Activated CD8-positive, alpha-beta T cell treated with anti-CD3 and anti-CD28 coated beads for 36 hours (primary cell): ENCODE measurements at regions of chr11 and their contacts with region 1.

Region 1: DNA sequence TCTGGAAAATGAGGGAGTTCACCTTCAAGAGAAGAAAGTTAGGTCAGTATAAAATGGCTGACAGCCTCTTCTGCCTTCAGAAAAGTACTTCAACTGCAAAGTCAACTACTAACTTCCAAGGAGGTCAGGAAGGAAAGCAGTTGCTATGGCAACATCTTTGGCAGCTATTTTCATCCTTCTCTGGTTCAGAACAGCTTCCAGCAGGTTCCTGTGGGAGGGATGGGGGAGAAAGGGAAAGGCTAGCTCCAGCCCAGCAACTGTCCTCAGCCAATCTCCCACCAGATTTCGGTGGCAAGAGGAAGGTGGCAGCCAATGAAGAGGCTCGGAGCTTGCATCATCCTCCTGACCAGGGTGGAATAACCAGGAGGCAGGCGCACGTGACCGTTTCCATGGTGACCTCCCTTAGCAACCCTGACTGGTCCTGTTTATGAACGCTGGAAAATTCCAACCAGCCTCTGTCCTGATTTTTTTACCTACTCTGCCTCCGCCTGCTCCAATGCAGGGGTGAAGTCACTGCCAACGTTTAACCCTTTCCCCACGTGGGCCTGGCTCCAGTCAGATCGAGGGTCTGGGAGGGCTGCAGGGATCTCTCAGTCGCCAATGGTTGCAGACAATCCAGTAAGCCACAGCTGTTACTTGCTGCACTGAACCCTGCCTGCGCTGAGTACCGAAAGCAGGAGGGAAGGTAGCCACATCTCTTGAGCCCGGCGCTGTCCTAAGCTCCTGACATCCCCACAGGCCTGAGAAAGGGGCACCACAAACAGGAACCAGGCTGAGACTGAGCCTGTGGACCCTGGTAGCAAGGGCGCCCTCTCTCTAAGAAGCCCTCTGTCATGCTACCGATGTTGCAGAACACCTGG is 11.2 kb upstream of the MALAT1 start:
- DNase-seq: peak; percentile 58
- ATAC-seq: peak; percentile 22
- H3K4me3 Mint-ChIP-seq: peak overlapping the region; percentile 0
- H3K27ac Mint-ChIP-seq: peak overlapping the region; percentile 46
- H3K4me1 Mint-ChIP-seq: peaks cover 40% of the 10 kb centered on the region
- H3K27me3 Mint-ChIP-seq: no peaks in the 10 kb centered on the region
- CTCF ChIP-seq: no peak

Region 2: DNA sequence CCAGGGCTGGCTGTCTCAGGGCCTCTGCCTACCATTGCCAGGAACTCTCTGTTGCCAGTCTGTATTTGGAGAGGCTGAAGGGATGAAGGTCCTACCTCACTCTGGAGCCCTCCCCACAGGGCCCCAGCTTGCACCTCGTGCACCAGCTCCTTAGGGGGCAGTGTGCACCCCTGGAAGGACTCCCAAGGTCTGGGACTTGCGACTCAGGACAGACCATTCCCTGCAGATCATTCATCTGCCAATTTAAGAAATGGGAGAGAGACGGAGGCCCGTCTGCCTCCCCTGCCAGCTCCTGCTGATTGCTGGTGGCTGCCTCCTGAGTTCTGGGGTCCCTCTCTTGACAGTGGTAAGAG is 16.3 kb before region 1 on chr11:
- CTCF ChIA-PET with region 1: interaction called, 12 read pairs
- POLR2A ChIA-PET with region 1: interaction called, 94 read pairs
- intact Hi-C with region 1: no loop called
- DNase-seq: no peak
- ATAC-seq: no peak
- H3K4me3 Mint-ChIP-seq: peak overlapping the region; percentile 72
- H3K27ac Mint-ChIP-seq: peak overlapping the region; percentile 99
- H3K4me1 Mint-ChIP-seq: peaks cover 26% of the 10 kb centered on the region
- H3K27me3 Mint-ChIP-seq: no peaks in the 10 kb centered on the region
- CTCF ChIP-seq: peak; percentile 37

Region 3: DNA sequence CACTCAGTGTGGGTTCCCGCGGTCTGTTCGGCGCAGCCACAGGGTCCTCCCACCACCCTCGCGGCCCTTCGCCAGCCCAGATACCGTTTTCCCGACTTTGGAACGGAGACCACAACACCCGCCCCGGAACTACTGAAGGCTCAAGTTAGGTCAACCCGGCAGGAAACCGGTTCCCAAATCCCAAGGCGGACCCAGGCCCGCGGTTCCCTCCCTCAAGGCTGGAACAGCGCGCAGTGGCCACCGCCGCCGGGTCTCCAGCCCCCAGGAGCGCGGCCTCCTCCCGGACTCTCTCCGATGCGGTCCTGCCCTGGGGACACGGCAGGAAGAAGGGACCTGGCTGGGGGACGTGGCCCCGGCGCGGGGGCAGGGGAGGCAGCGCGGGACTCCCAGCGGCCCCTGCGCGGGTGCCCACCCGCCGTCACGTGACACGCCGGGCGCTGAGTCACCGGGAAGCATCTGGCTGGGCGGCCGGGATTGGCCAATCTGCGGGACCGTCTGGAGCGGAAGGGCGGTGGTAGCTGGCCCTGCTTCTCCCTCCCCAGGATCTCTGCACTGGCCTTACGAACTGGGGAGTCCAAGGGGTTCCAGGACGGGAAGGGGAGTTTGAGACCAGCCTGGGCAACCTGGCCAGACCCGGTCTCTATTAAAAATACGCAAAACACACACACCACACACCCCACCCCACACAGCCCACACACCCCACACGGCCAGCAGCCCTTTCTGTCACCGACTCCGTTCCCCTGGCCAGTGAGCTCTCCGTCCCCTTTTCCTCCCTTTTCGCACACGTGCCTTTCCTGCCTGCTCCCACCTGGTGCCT is 10.3 kb before region 1 on chr11:
- CTCF ChIA-PET with region 1: interaction called, 12 read pairs
- POLR2A ChIA-PET with region 1: interaction called, 94 read pairs
- intact Hi-C with region 1: no loop called
- DNase-seq: peak; percentile 94
- ATAC-seq: peak; percentile 85
- H3K4me3 Mint-ChIP-seq: peak overlapping the region; percentile 96
- H3K27ac Mint-ChIP-seq: peak overlapping the region; percentile 100
- H3K4me1 Mint-ChIP-seq: peaks cover 8% of the 10 kb centered on the region
- H3K27me3 Mint-ChIP-seq: no peaks in the 10 kb centered on the region
- CTCF ChIP-seq: no peak